Astrocyte of the cerebellum (primary cell): ENCODE measurements at regions of chr17 and their contacts with region 1.

Region 1: GRCh38 chr17:16285957-16286640 is 67.2 kb downstream of the CENPV start:
- DNase-seq: peak; percentile 99
- H3K4me3 ChIP-seq: peak overlapping the region; percentile 10
- CTCF ChIP-seq: peak; percentile 55

Region 2: GRCh38 chr17:16353317-16354174 is 67.4 kb after region 1 on chr17 and contains the start of gene CENPV:
- in situ Hi-C with region 1: loop called (anchors 5 kb)
- DNase-seq: no peak
- H3K4me3 ChIP-seq: peak within 1 kb of the TSS; percentile 53
- CTCF ChIP-seq: no peak